CD8-positive, alpha-beta memory T cell (primary cell): ENCODE measurements at regions of chr12 and their contacts with region 1.

Region 1: DNA sequence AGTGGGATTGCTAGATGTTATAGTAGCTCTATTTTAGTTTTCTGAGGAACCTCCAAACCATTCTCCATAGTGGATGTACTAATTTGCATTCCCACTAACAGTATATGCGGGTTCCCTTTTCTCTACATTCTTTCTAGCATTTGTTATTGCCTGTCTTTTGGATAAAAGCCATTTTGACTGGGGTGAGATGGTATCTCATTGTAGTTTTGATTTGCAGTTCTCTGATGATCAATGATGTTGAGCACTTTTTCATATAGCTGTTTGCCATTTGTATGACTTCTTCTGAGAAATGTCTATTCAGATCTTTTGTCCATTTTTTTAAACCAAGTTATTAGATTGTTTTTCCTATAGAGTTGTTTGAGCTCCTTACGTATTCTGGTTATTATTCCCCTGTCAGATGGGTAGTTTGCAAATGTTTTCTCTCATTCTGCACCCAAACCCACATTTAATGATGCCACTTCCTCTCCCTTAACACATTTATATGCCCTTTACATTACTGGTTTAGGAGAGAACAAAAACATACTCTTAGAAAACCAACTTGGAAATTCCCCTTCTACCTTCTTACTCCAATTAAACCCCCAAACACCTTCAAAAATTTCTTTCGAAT is 48.2 kb downstream of the NELL2 start:
- DNase-seq: peak in 2 of 5 donors; percentile 76 to 81
- H3K4me3 ChIP-seq: peak overlapping the region; percentile 3
- H3K4me3 Mint-ChIP-seq: peak overlapping the region; percentile 55 to 83 (median 72)
- H3K27ac ChIP-seq: no peak overlapping the region
- H3K27ac Mint-ChIP-seq: peak overlapping the region; percentile 82 to 97 (median 92)
- H3K4me1 ChIP-seq: peaks cover 51% of the 10 kb centered on the region
- H3K4me1 Mint-ChIP-seq: peaks cover 58 to 88% (median 84%) of the 10 kb centered on the region in 3 donors
- H3K27me3 ChIP-seq: no peaks in the 10 kb centered on the region
- H3K27me3 Mint-ChIP-seq: no peaks in the 10 kb centered on the region

Region 2: DNA sequence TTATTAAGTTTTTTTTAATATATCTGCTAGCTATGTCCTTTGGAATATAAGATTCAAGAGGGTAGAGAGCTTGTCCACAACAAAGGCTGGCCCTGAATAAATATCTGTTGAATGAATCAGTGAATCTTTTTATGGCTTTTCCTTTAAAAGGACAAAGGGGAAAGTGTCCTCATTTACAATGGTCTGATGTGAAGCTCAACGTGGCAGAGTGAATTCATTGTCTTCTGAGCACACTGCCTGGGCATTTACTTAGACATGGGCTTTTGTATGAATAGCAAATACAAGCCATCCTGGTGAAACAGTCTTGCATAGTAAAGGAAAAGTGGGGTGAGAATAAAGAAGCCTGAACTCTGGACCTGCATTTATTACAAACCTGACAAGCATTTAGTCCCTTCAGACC is 153.1 kb before region 1 on chr12:
- CTCF ChIA-PET with region 1: no interaction called
- POLR2A ChIA-PET with region 1: no interaction called
- DNase-seq: no peak
- H3K4me3 ChIP-seq: no peak overlapping the region
- H3K4me3 Mint-ChIP-seq: no peak overlapping the region
- H3K27ac ChIP-seq: no peak overlapping the region
- H3K27ac Mint-ChIP-seq: no peak overlapping the region
- H3K4me1 ChIP-seq: no peaks in the 10 kb centered on the region
- H3K4me1 Mint-ChIP-seq: peaks cover 0 to 6% (median 3%) of the 10 kb centered on the region in 3 donors
- H3K27me3 ChIP-seq: no peaks in the 10 kb centered on the region
- H3K27me3 Mint-ChIP-seq: no peaks in the 10 kb centered on the region

Region 3: GRCh38 chr12:44812062-44812461 is 15.9 kb before region 1 on chr12:
- CTCF ChIA-PET with region 1: interaction called, 31 read pairs
- POLR2A ChIA-PET with region 1: interaction called, 3 read pairs
- DNase-seq: peak in 4 of 5 donors; percentile 33 to 67 (median 54)
- H3K4me3 ChIP-seq: no peak overlapping the region
- H3K4me3 Mint-ChIP-seq: no peak overlapping the region
- H3K27ac ChIP-seq: no peak overlapping the region
- H3K27ac Mint-ChIP-seq: peak overlapping the region in 4 of 8 donors; percentile 15 to 75 (median 36)
- H3K4me1 ChIP-seq: peaks cover 19% of the 10 kb centered on the region
- H3K4me1 Mint-ChIP-seq: peaks cover 42 to 63% (median 60%) of the 10 kb centered on the region in 3 donors
- H3K27me3 ChIP-seq: no peaks in the 10 kb centered on the region
- H3K27me3 Mint-ChIP-seq: no peaks in the 10 kb centered on the region

Region 4: GRCh38 chr12:44847888-44848702 is 20.2 kb after region 1 on chr12:
- CTCF ChIA-PET with region 1: interaction called, 4 read pairs
- POLR2A ChIA-PET with region 1: interaction called, 10 read pairs
- DNase-seq: peak; percentile 52 to 89 (median 87)
- H3K4me3 ChIP-seq: peak overlapping the region; percentile 51
- H3K4me3 Mint-ChIP-seq: peak overlapping the region; percentile 69 to 89 (median 77)
- H3K27ac ChIP-seq: peak overlapping the region; percentile 72
- H3K27ac Mint-ChIP-seq: peak overlapping the region; percentile 93 to 99 (median 96)
- H3K4me1 ChIP-seq: peaks cover 89% of the 10 kb centered on the region
- H3K4me1 Mint-ChIP-seq: peaks cover 76 to 95% (median 94%) of the 10 kb centered on the region in 3 donors
- H3K27me3 ChIP-seq: no peaks in the 10 kb centered on the region
- H3K27me3 Mint-ChIP-seq: peaks cover 0 to 3% of the 10 kb centered on the region in 2 donors

Region 5: DNA sequence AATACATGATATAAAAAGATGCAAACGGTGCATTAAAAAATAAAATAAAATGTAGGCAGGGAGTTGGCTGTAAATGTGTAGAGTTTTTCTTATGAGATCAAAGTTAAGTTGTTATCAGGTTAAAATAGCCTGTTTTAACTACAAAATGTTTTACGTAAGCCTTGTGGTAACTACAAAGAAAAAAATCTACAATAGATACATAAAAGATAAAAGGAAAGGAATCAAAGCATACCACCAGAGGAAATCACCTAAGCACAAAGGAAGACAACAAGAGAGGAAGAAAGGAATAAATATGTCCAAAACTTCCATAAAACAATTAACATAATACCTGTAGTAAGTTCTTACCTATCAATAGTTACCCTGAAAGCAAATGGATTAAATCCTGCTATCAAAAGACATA is 35.9 kb after region 1 on chr12:
- CTCF ChIA-PET with region 1: interaction called, 7 read pairs
- POLR2A ChIA-PET with region 1: interaction called, 16 read pairs
- DNase-seq: peak in 2 of 5 donors; percentile 53 to 74
- H3K4me3 ChIP-seq: no peak overlapping the region
- H3K4me3 Mint-ChIP-seq: peak overlapping the region in 5 of 7 donors; percentile 1 to 51 (median 35)
- H3K27ac ChIP-seq: no peak overlapping the region
- H3K27ac Mint-ChIP-seq: peak overlapping the region; percentile 12 to 78 (median 42)
- H3K4me1 ChIP-seq: peaks cover 39% of the 10 kb centered on the region
- H3K4me1 Mint-ChIP-seq: peaks cover 50 to 84% (median 73%) of the 10 kb centered on the region in 3 donors
- H3K27me3 ChIP-seq: no peaks in the 10 kb centered on the region
- H3K27me3 Mint-ChIP-seq: peaks cover 0 to 2% of the 10 kb centered on the region in 2 donors

Region 6: GRCh38 chr12:44869503-44869902 is 41.6 kb after region 1 on chr12:
- CTCF ChIA-PET with region 1: interaction called, 7 read pairs
- POLR2A ChIA-PET with region 1: interaction called, 11 read pairs
- DNase-seq: no peak
- H3K4me3 ChIP-seq: no peak overlapping the region
- H3K4me3 Mint-ChIP-seq: peak overlapping the region in 4 of 7 donors; percentile 17 to 51 (median 34)
- H3K27ac ChIP-seq: no peak overlapping the region
- H3K27ac Mint-ChIP-seq: peak overlapping the region in 6 of 8 donors; percentile 39 to 66 (median 55)
- H3K4me1 ChIP-seq: peaks cover 26% of the 10 kb centered on the region
- H3K4me1 Mint-ChIP-seq: peaks cover 53 to 86% (median 75%) of the 10 kb centered on the region in 3 donors
- H3K27me3 ChIP-seq: no peaks in the 10 kb centered on the region
- H3K27me3 Mint-ChIP-seq: peaks cover 3 to 18% of the 10 kb centered on the region in 2 donors